ENCODE measurements at regions of chr4 and their contacts with region 1.

Region 1: GRCh38 chr4:68498413-68499007 is 51.2 kb downstream of the TMPRSS11E start:
- DNase-seq: peak; percentile 68 to 78
- H3K4me3 ChIP-seq: no peak overlapping the region
- H3K4me3 Mint-ChIP-seq: no peak overlapping the region
- H3K27ac Mint-ChIP-seq: no peak overlapping the region
- H3K4me1 ChIP-seq: peaks cover 14% of the 10 kb centered on the region
- H3K4me1 Mint-ChIP-seq: no peaks in the 10 kb centered on the region
- H3K27me3 ChIP-seq: no peaks in the 10 kb centered on the region
- H3K27me3 Mint-ChIP-seq: no peaks in the 10 kb centered on the region
- CTCF ChIP-seq: peak; percentile 77 to 85

Region 2: DNA sequence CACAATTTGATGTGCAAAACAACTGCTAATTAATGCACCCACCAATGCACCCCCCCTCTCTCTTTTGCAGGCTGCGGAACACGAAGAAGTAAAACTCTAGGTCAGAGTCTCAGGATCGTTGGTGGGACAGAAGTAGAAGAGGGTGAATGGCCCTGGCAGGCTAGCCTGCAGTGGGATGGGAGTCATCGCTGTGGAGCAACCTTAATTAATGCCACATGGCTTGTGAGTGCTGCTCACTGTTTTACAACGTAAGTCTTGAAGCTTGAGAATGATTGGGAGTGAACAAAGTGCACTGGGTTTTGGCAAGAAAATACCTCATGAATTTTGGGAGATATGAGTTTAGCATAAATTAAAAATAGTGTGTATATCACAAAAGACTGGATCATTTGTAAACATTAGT is 22.3 kb before region 1 on chr4:
- CTCF ChIA-PET with region 1: no interaction called
- POLR2A ChIA-PET with region 1: no interaction called
- intact Hi-C with region 1: no loop called
- DNase-seq: no peak
- H3K4me3 ChIP-seq: no peak overlapping the region
- H3K4me3 Mint-ChIP-seq: no peak overlapping the region
- H3K27ac Mint-ChIP-seq: no peak overlapping the region
- H3K4me1 ChIP-seq: no peaks in the 10 kb centered on the region
- H3K4me1 Mint-ChIP-seq: peaks cover 7% of the 10 kb centered on the region
- H3K27me3 ChIP-seq: no peaks in the 10 kb centered on the region
- H3K27me3 Mint-ChIP-seq: no peaks in the 10 kb centered on the region
- CTCF ChIP-seq: no peak

Region 3: GRCh38 chr4:68655764-68656444 is 157.4 kb after region 1 on chr4:
- CTCF ChIA-PET with region 1: no interaction called
- POLR2A ChIA-PET with region 1: no interaction called
- intact Hi-C with region 1: loop called (anchors 1 kb)
- DNase-seq: peak; percentile 45 to 48
- H3K4me3 ChIP-seq: no peak overlapping the region
- H3K4me3 Mint-ChIP-seq: peak overlapping the region; percentile 54
- H3K27ac Mint-ChIP-seq: peak overlapping the region; percentile 39
- H3K4me1 ChIP-seq: peaks cover 28% of the 10 kb centered on the region
- H3K4me1 Mint-ChIP-seq: peaks cover 17% of the 10 kb centered on the region
- H3K27me3 ChIP-seq: no peaks in the 10 kb centered on the region
- H3K27me3 Mint-ChIP-seq: no peaks in the 10 kb centered on the region
- CTCF ChIP-seq: no peak

Region 4: DNA sequence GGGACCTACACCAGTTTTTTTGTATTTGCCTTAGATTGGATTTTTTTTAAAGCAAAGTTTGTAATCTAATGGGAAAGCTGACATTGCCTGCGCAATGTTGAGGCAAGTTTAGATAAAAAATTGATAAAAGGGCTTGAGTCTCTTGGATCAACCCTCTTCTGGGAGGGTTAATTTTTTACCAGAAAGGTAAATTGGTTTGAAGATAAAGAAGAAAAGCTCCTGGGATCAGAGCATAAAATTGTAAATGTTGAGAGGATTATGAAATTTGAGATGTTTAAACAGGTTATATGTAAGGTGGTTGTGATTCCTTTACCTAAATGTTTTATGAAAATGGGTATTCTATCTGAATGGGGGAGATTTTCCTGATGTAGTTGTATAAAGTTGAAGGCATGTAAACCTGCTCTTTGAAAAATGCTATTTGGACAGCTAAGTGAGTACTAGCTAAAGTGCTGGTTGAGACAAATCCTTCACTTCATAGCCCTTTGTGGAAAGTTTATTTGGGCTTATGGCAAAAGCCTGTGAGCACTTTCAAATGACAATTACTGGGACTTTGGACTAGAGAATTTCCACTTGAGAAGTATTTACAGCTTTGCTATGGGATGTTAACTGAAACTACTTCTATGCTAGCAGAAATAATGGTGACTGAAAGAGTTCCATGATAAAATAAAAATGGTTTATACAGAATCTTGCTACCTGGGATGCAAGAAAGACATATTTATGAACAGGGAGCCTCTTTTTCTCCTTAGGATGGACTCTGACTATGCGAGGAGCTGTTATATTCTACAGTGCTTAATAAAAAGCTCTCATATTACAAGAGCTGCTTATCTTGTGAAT is 373.5 kb after region 1 on chr4:
- CTCF ChIA-PET with region 1: no interaction called
- POLR2A ChIA-PET with region 1: no interaction called
- intact Hi-C with region 1: loop called (anchors 1 kb)
- DNase-seq: peak in 1 of 2 experiments; percentile 67
- H3K4me3 ChIP-seq: no peak overlapping the region
- H3K4me3 Mint-ChIP-seq: peak overlapping the region; percentile 44
- H3K27ac Mint-ChIP-seq: peak overlapping the region; percentile 69
- H3K4me1 ChIP-seq: peaks cover 34% of the 10 kb centered on the region
- H3K4me1 Mint-ChIP-seq: no peaks in the 10 kb centered on the region
- H3K27me3 ChIP-seq: no peaks in the 10 kb centered on the region
- H3K27me3 Mint-ChIP-seq: no peaks in the 10 kb centered on the region
- CTCF ChIP-seq: no peak

Region 5: GRCh38 chr4:68963374-68963773 is 464.9 kb after region 1 on chr4:
- CTCF ChIA-PET with region 1: no interaction called
- POLR2A ChIA-PET with region 1: no interaction called
- intact Hi-C with region 1: loop called (anchors 2 kb)
- DNase-seq: peak; percentile 29 to 42
- H3K4me3 ChIP-seq: no peak overlapping the region
- H3K4me3 Mint-ChIP-seq: peak overlapping the region; percentile 38
- H3K27ac Mint-ChIP-seq: peak overlapping the region; percentile 34
- H3K4me1 ChIP-seq: peaks cover 49% of the 10 kb centered on the region
- H3K4me1 Mint-ChIP-seq: peaks cover 34% of the 10 kb centered on the region
- H3K27me3 ChIP-seq: no peaks in the 10 kb centered on the region
- H3K27me3 Mint-ChIP-seq: no peaks in the 10 kb centered on the region
- CTCF ChIP-seq: no peak

Region 6: DNA sequence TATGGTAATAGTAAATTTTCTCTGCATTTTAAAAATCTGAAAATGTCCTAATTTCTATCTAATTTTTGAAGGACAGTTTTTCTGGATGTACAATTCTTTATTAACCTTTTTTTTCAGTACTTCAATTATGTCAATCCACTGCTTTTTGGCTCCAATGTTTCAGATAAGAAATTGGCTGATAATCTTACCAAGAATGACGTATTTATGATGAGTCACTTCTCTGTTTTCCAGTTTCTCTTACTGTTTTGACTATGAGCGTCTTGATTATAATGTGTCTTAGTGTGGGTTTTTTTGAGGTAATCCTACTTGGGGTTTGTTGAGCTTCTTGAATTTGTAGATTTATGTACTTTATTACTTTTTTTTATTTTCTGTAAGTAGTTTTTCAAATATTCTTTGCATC is 668.8 kb after region 1 on chr4:
- CTCF ChIA-PET with region 1: interaction called, 3 read pairs
- POLR2A ChIA-PET with region 1: no interaction called
- intact Hi-C with region 1: loop called (anchors 1 kb)
- DNase-seq: no peak
- H3K4me3 ChIP-seq: no peak overlapping the region
- H3K4me3 Mint-ChIP-seq: no peak overlapping the region
- H3K27ac Mint-ChIP-seq: no peak overlapping the region
- H3K4me1 ChIP-seq: 0 out of 2 replicates have a peak, but pooled peaks cover 4% of the 10 kb centered on the region
- H3K4me1 Mint-ChIP-seq: peaks cover 6% of the 10 kb centered on the region
- H3K27me3 ChIP-seq: no peaks in the 10 kb centered on the region
- H3K27me3 Mint-ChIP-seq: no peaks in the 10 kb centered on the region
- CTCF ChIP-seq: no peak

Region 7: DNA sequence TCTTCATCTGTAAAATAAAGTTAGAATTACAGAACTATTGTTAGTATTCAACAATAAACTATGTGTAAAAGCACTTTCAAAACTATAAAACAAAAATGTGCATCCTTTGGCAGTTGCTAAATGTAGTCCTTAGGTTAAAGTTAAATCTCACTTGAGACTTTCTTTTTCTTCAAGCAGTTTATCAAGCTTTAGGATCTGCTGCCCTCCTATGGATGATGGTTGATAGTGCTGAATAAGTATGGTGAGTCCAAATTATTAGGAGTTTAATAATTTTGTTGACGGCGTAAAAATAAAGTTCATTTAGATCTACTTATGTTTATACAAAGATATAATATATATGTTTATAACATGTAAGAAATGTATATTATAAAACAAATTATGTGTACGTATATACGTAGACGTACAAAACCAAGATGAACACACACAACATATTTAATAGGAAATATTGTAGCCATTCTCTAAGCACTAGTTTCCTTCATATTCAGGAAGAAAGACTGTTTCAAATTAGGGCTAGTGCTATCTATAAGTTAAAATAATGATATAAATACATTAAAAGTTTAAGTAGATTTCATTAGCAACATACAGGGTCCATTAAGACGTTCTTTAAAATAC is 1118.7 kb after region 1 on chr4:
- CTCF ChIA-PET with region 1: no interaction called
- POLR2A ChIA-PET with region 1: no interaction called
- intact Hi-C with region 1: loop called (anchors 1 kb)
- DNase-seq: peak in 1 of 2 experiments; percentile 52
- H3K4me3 ChIP-seq: no peak overlapping the region
- H3K4me3 Mint-ChIP-seq: no peak overlapping the region
- H3K27ac Mint-ChIP-seq: no peak overlapping the region
- H3K4me1 ChIP-seq: no peaks in the 10 kb centered on the region
- H3K4me1 Mint-ChIP-seq: no peaks in the 10 kb centered on the region
- H3K27me3 ChIP-seq: no peaks in the 10 kb centered on the region
- H3K27me3 Mint-ChIP-seq: no peaks in the 10 kb centered on the region
- CTCF ChIP-seq: peak; percentile 52 to 54